HEK293T (cell line): ENCODE measurements at regions of chr1 and their contacts with region 1.

Region 1: DNA sequence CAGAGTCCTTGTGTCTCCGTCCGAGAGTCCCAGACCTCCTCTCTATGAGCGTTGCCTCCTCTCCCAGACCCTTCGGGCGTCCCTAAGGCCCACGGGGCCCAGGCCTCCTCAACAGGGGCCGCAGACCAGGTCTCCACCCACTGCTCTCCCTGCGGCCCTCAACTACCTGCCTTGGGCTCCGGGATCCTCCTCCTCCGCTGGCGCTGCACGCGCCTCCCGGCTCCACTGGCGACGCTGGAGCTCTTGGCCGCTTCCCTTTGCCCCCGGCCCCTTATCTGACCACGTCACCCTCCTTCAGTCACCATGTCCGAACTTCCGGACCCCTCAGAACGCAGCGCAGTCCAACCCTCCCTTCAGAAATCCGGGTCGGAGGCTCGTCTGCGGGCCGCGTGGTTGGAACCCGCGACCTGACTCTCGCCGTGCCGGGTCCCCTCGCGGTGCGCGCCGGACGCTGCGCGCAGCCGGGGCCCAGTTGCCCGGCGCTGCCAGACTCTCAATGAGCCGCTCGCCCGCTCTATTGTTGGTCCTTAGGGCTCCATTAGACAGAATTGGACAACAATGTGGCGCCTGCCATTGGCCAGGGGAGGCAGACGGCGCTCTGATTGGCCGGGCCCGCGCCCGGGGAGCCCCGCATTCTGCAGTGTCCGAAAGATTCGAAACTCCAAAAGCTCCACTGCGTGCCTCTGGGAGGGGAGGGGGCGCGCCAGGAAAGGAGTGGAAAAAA is at the start of gene DMRTA2:
- DNase-seq: peak; percentile 73

Region 2: DNA sequence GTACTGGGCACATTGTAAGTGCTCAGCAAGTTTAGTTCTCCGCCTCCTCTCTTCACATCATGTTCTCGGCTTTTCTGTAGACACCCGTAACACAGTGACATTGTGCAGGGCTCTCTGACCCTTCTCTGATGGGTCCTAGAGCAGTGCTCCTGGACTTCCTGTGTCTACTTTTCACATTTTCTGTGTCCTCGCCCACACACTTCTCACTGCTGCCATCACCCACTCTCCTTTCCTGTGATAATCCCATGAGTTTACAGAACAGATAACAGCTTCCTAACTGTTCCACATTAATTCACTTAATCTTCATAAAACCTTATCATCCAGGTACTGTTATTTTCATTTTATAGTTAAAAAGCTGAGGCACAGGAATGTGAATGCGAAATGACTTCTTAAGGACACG is 13.4 kb after region 1 on chr1:
- CTCF ChIA-PET with region 1: no interaction called
- POLR2A ChIA-PET with region 1: interaction called, 16 read pairs
- DNase-seq: no peak